Endothelial cell of umbilical vein (primary cell): ENCODE measurements at regions of chr17 and their contacts with region 1.

Region 1: GRCh38 chr17:66906321-66907278 is 57.9 kb upstream of the CACNG4 start:
- DNase-seq: peak; percentile 71
- H3K4me3 ChIP-seq: no peak overlapping the region
- H3K27ac ChIP-seq: no peak overlapping the region
- H3K4me1 ChIP-seq: peaks cover 9% of the 10 kb centered on the region
- H3K27me3 ChIP-seq: no peaks in the 10 kb centered on the region
- CTCF ChIP-seq: peak; percentile 82 to 90
- POLR2A ChIP-seq: no peak

Region 2: DNA sequence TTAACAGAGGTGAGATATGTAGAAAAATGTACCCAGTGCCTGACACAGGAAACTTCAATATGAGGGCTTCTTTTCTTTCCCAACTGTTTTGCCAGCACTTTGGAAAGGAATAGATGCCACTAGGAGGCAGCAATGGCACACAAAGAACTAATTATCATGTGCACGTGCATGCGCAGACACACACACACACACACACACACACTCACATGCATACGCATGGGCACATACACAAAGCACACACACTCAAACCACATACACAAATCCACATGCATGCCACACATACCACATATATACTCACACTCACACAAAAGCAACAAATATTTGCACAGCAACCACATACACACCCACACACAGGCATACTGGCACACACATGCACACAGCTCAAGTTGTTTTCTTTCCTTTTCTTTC is 705.9 kb before region 1 on chr17:
- CTCF ChIA-PET with region 1: interaction called, 4 read pairs
- POLR2A ChIA-PET with region 1: no interaction called
- dilution Hi-C with region 1: no loop called
- intact Hi-C with region 1: loop called (anchors 1 kb)
- DNase-seq: peak; percentile 79
- H3K4me3 ChIP-seq: no peak overlapping the region
- H3K27ac ChIP-seq: no peak overlapping the region
- H3K4me1 ChIP-seq: no peaks in the 10 kb centered on the region
- H3K27me3 ChIP-seq: no peaks in the 10 kb centered on the region
- CTCF ChIP-seq: peak; percentile 67 to 70
- POLR2A ChIP-seq: no peak

Region 3: GRCh38 chr17:66715745-66716156 is 190.8 kb before region 1 on chr17:
- CTCF ChIA-PET with region 1: interaction called, 24 read pairs
- POLR2A ChIA-PET with region 1: no interaction called
- dilution Hi-C with region 1: no loop called
- intact Hi-C with region 1: loop called (anchors 1 kb)
- DNase-seq: peak; percentile 70
- H3K4me3 ChIP-seq: no peak overlapping the region
- H3K27ac ChIP-seq: no peak overlapping the region
- H3K4me1 ChIP-seq: no peaks in the 10 kb centered on the region
- H3K27me3 ChIP-seq: no peaks in the 10 kb centered on the region
- CTCF ChIP-seq: peak; percentile 58 to 69
- POLR2A ChIP-seq: no peak

Region 4: DNA sequence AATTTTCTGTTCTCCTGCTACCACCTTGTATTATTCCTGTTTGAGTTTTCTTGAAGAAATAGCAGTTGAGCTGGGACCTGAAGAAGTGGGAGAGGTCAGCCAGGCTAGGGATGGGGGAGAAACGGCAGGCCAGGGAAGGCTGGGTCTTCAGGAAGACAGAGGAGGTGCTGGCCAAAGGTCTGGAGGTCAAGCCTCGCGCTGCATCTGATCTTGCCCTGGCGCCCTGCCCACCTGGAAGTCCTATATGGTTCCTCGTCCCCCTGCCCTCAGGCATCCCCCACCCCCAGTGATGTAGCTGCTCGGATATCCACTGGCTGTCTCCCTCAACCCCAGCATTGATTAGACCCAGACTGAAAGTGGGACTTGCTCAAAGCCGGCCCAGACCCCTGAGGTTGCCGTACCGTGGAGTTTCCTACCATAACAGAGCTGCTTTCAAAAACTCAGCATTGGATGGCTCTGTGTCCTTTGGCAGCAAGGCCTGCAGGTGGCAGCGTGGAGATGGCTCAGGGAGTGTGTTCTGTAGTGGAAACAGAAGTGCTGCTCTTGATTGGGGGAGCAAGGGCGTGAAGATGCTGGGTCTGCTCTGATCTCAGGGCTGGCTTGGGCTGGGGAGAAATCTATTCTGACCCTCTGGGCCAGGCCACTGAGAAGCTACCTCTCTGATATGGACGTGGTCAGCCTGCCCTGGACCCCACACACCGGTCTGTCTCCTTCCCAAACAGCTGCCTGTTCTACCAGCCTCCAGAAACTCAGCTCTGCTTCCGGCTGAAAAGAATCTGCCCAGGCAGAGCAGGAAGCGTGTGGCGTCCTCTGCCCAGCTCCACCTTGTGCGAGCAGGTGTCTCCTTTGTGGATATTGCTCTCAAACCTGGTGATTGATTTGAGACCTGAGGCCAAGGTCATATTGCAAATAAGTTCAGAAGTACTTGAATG is 178.7 kb before region 1 on chr17:
- CTCF ChIA-PET with region 1: interaction called, 22 read pairs
- POLR2A ChIA-PET with region 1: no interaction called
- dilution Hi-C with region 1: no loop called
- intact Hi-C with region 1: loop called (anchors 1 kb)
- DNase-seq: peak; percentile 61
- H3K4me3 ChIP-seq: no peak overlapping the region
- H3K27ac ChIP-seq: no peak overlapping the region
- H3K4me1 ChIP-seq: no peaks in the 10 kb centered on the region
- H3K27me3 ChIP-seq: no peaks in the 10 kb centered on the region
- CTCF ChIP-seq: peak; percentile 65 to 79
- POLR2A ChIP-seq: no peak

Region 5: GRCh38 chr17:66855204-66855603 is 51.4 kb before region 1 on chr17:
- CTCF ChIA-PET with region 1: interaction called, 5 read pairs
- POLR2A ChIA-PET with region 1: no interaction called
- dilution Hi-C with region 1: no loop called
- intact Hi-C with region 1: loop called (anchors 1 kb)
- DNase-seq: no peak
- H3K4me3 ChIP-seq: no peak overlapping the region
- H3K27ac ChIP-seq: no peak overlapping the region
- H3K4me1 ChIP-seq: no peaks in the 10 kb centered on the region
- H3K27me3 ChIP-seq: peaks cover 0 to 10% of the 10 kb centered on the region in 2 experiments
- CTCF ChIP-seq: peak; percentile 26 to 31
- POLR2A ChIP-seq: no peak

Region 6: DNA sequence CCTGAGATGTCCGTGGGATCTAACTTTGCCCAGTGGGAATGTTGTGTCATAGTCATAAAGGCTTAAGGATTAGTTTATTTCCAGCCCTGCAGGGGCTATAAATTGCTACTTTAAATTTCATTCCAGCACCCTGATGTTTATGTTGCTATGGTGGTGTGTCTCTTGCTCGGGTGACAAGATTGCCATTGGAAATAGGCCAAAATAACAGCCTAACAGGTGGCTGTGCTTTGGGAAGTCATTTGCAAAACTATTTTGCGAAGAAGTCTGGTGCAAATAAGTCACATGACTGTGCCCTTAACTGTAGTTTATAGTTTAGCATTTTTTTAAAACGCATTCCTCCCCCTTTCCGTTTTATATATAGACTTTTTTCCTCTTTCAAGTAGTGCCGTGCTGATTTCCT is 493.6 kb after region 1 on chr17:
- CTCF ChIA-PET with region 1: no interaction called
- POLR2A ChIA-PET with region 1: no interaction called
- dilution Hi-C with region 1: no loop called
- intact Hi-C with region 1: no loop called
- DNase-seq: peak; percentile 27
- H3K4me3 ChIP-seq: no peak overlapping the region
- H3K27ac ChIP-seq: no peak overlapping the region
- H3K4me1 ChIP-seq: no peaks in the 10 kb centered on the region
- H3K27me3 ChIP-seq: no peaks in the 10 kb centered on the region
- CTCF ChIP-seq: no peak
- POLR2A ChIP-seq: no peak